ENCODE measurements at regions of chr7 and their contacts with region 1.

Region 1: GRCh38 chr7:149239345-149240191 is at the start of gene ZNF212:
- DNase-seq: peak; percentile 96
- H3K4me3 Mint-ChIP-seq: peak within 1 kb of the TSS; percentile 93
- H3K27ac Mint-ChIP-seq: peak within 1 kb of the TSS; percentile 90
- H3K4me1 Mint-ChIP-seq: peaks cover 26% of the 10 kb centered on the region
- H3K27me3 Mint-ChIP-seq: peaks cover 3% of the 10 kb centered on the region
- total RNA-seq, gene ZNF212: 18.0 and 18.7 TPM in 2 replicates

Region 2: GRCh38 chr7:149147072-149147751 is 92.4 kb before region 1 on chr7 and contains the start of gene ZNF398:
- intact Hi-C with region 1: loop called (anchors 1 kb)
- DNase-seq: peak; percentile 93
- H3K4me3 Mint-ChIP-seq: peak within 1 kb of the TSS; percentile 93
- H3K27ac Mint-ChIP-seq: peak within 1 kb of the TSS; percentile 93
- H3K4me1 Mint-ChIP-seq: peaks cover 26% of the 10 kb centered on the region
- H3K27me3 Mint-ChIP-seq: no peaks in the 10 kb centered on the region
- total RNA-seq, gene ZNF398: 11.7 and 14.2 TPM in 2 replicates

Region 3: GRCh38 chr7:149195180-149196150 is 44.1 kb before region 1 on chr7 and contains the start of gene ZNF282:
- intact Hi-C with region 1: loop called (anchors 1 kb)
- DNase-seq: peak; percentile 94
- H3K4me3 Mint-ChIP-seq: peak within 1 kb of the TSS; percentile 96
- H3K27ac Mint-ChIP-seq: peak within 1 kb of the TSS; percentile 96
- H3K4me1 Mint-ChIP-seq: peaks cover 38% of the 10 kb centered on the region
- H3K27me3 Mint-ChIP-seq: peaks cover 4% of the 10 kb centered on the region
- total RNA-seq, gene ZNF282: 44.7 and 49.9 TPM in 2 replicates

Region 4: DNA sequence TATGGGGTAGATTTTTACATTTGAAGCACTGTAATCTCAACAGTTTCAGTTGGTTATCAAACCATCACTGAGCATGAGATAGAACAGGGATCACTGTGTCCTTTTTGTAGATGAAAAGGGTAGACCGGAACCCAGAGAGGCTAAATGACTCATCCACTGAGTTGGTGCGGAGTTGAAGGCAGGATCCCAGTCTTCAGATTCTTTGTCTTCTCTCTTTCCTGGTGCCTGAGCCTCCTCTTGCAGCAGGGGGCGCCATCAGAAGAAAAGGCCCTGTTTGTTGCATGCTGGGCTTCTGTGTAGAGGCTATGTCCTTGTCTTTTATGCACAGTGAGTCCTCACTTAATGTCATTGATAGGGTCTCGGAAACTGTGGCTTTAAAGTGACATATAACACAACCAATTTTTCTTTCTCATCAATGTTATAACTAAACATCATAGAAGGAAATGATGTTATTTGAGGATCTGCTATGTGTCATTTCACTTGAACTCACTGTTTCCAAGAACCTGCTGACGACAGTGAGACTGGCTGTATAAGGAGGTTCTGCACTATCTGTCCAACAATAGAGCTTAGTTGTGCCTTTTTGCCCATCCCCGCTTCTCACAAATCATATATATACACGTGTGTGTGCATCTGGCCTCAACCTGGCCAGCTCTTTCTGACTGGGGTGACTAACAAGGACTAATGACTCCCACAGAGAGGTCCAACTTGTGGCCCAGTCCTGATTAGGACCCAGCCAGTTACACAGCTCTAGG is 29.9 kb before region 1 on chr7:
- intact Hi-C with region 1: loop called (anchors 2 kb)
- DNase-seq: peak; percentile 92
- H3K4me3 Mint-ChIP-seq: peak overlapping the region; percentile 49
- H3K27ac Mint-ChIP-seq: peak overlapping the region; percentile 93
- H3K4me1 Mint-ChIP-seq: peaks cover 16% of the 10 kb centered on the region
- H3K27me3 Mint-ChIP-seq: no peaks in the 10 kb centered on the region

Region 5: DNA sequence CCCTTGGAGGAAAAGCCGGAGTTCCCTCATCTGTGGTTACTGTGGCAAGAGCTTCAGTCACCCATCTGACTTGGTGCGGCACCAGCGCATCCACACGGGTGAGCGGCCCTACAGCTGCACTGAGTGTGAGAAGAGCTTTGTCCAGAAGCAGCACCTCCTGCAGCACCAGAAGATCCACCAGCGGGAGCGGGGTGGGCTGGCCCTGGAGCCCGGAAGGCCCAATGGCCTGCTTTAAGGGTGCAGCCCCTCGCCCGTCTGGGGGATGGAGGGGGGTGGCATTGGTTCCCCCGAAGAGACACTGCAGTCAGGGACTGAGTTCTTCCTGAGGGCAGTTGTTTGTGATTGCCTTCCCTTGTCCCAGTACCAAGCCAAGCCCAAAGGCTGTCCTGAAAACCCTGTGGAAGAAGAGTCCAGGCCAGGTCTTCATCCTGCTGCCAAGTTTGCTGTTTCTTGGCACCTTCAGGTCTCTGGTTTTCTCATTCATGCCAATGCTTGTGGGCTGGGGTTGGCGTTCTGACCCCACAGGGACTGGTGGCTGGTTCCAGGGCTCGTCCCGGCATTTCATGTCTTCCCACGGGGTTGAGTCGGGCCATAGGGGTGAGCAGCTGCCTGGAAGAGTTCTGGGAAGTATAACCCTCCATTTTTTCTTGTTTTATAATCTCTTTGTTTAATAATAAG is 14.8 kb after region 1 on chr7:
- intact Hi-C with region 1: no loop called
- DNase-seq: no peak
- H3K4me3 Mint-ChIP-seq: no peak overlapping the region
- H3K27ac Mint-ChIP-seq: no peak overlapping the region
- H3K4me1 Mint-ChIP-seq: peaks cover 3% of the 10 kb centered on the region
- H3K27me3 Mint-ChIP-seq: no peaks in the 10 kb centered on the region

Region 6: DNA sequence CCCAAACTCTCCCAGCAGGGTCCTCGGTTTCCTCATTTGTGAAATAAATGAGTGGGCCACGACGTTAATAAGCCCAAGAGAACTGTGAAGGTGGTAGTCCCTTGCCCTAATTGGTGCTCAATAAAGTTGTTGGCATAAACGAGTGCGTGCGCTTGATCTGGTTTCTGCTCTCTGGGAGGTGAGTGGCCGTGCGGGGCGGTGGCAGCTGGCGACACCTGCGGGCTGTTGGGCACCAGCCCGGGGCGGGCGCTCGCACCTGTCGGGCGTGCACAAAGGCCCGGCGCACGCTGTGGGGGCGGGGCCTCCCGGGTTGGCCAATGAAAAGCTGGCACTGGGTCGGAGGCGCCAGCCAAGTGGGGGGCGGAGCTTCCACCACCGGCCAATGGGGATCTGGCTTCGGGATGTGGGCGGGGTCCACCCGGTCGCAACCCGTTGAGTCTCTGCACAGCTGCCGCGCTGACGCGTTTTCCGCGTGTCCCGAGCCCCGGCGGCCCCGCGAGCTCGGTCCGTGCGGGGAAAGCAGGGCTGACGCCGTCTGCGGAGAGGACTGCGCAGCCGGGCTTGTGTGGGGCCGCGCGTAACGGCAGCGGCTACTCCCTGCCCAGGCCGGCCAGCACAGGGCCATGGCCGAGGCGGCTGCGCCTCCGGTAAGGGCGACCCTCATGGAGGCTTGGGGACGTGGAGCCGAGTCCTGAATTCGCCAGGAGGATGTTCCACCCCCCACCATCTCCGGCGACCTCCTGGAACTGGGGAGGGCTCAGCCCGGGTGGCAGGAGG is 45.5 kb after region 1 on chr7:
- intact Hi-C with region 1: loop called (anchors 1 kb)
- DNase-seq: peak; percentile 100
- H3K4me3 Mint-ChIP-seq: peak overlapping the region; percentile 83
- H3K27ac Mint-ChIP-seq: peak overlapping the region; percentile 58
- H3K4me1 Mint-ChIP-seq: peaks cover 32% of the 10 kb centered on the region
- H3K27me3 Mint-ChIP-seq: no peaks in the 10 kb centered on the region

Region 7: GRCh38 chr7:149497456-149498261 is 258.1 kb after region 1 on chr7 and contains the start of gene ZNF746:
- intact Hi-C with region 1: loop called (anchors 10 kb)
- DNase-seq: peak; percentile 95
- H3K4me3 Mint-ChIP-seq: peak within 1 kb of the TSS; percentile 97
- H3K27ac Mint-ChIP-seq: peak within 1 kb of the TSS; percentile 96
- H3K4me1 Mint-ChIP-seq: peaks cover 19% of the 10 kb centered on the region
- H3K27me3 Mint-ChIP-seq: peaks cover 2% of the 10 kb centered on the region
- total RNA-seq, gene ZNF746: 23.3 and 24.8 TPM in 2 replicates

Region 8: GRCh38 chr7:149873074-149873969 is 633.8 kb after region 1 on chr7 and contains the start of gene ATP6V0E2:
- intact Hi-C with region 1: loop called (anchors 10 kb)
- DNase-seq: peak; percentile 98
- H3K4me3 Mint-ChIP-seq: peak within 1 kb of the TSS; percentile 90
- H3K27ac Mint-ChIP-seq: peak within 1 kb of the TSS; percentile 92
- H3K4me1 Mint-ChIP-seq: peaks cover 71% of the 10 kb centered on the region
- H3K27me3 Mint-ChIP-seq: no peaks in the 10 kb centered on the region
- total RNA-seq, gene ATP6V0E2: 43.5 and 46.7 TPM in 2 replicates

Measured in activated CD4-positive, alpha-beta T cell treated with anti-CD3 and anti-CD28 coated beads, Interleukin-2, amount 10 ng/mL, durations not matched to agents 24 days and 14 days (primary cell).